ENCODE measurements at regions of chr19 and their contacts with region 1.

Region 1: DNA sequence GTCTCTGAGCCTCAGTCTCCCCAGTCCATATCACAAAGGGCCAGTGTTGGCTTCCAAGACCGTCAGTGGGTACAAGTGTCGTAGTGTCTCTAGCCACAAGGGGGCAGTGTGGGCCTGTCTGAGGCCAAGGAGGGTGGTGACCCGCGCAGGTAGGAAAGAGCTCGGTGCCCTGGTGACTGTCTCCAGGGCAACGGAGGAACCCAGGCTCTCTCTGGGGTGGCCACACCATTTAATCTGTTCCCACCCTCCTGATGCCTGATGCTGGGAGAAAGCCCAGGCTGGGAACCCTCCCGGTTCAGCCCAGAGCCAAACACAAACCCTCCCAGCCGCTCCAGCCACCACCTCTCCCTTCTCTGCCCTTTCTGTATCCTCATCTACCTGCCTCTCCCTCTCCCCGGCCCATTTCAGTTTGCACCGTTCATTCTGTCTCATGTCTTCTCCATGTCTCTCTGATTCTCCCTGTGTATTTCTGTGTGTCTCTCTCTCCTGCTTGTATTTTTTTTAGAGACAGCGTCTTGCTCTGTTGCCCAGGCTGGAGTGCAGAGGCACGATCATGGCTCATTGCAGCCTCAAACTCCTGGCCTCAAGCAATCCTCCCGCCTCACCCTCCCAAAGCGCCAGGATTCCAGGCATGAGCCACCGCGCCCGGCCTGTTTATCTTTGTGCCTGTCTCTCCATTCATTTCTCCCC is 17.5 kb upstream of the MEIS3 start:
- DNase-seq: peak; percentile 89
- H3K4me3 Mint-ChIP-seq: no peak overlapping the region
- H3K27ac Mint-ChIP-seq: peak overlapping the region; percentile 33
- H3K4me1 Mint-ChIP-seq: peaks cover 55% of the 10 kb centered on the region
- H3K27me3 Mint-ChIP-seq: peaks cover 60% of the 10 kb centered on the region

Region 2: DNA sequence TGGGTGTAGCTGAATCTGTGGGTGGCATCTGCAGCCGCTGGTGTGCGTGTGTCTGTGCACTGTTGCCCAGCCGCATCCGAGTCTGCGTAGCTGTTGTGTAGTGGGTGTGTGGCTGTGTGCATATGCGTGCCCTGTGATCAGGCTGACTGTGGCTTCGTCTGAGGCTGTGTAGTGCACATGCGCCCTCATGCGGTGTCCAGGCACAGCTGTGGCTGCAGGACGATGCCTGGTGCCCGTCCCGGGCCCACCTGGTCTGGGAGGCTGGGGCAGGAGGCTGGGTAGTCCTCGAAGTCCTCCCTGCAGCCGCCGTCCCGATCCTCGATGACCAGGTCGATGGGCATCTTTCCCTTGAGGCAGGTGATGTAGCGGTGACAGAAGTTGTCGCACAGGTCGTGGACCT is 22.4 kb before region 1 on chr19:
- CTCF ChIA-PET with region 1: no interaction called
- DNase-seq: no peak
- H3K4me3 Mint-ChIP-seq: no peak overlapping the region
- H3K27ac Mint-ChIP-seq: no peak overlapping the region
- H3K4me1 Mint-ChIP-seq: peaks cover 9% of the 10 kb centered on the region
- H3K27me3 Mint-ChIP-seq: peaks cover 61% of the 10 kb centered on the region

Region 3: GRCh38 chr19:47483800-47484690 is 47.2 kb after region 1 on chr19 and contains the start of gene KPTN:
- CTCF ChIA-PET with region 1: interaction called, 28 read pairs
- DNase-seq: peak; percentile 93
- H3K4me3 Mint-ChIP-seq: peak within 1 kb of the TSS; percentile 99
- H3K27ac Mint-ChIP-seq: peak within 1 kb of the TSS; percentile 94
- H3K4me1 Mint-ChIP-seq: peaks cover 46% of the 10 kb centered on the region
- H3K27me3 Mint-ChIP-seq: peaks cover 15% of the 10 kb centered on the region

Region 4: GRCh38 chr19:47514869-47515588 is 78.2 kb after region 1 on chr19 and contains the start of gene NAPA:
- CTCF ChIA-PET with region 1: interaction called, 14 read pairs
- DNase-seq: peak; percentile 100
- H3K4me3 Mint-ChIP-seq: peak within 1 kb of the TSS; percentile 98
- H3K27ac Mint-ChIP-seq: peak within 1 kb of the TSS; percentile 98
- H3K4me1 Mint-ChIP-seq: peaks cover 89% of the 10 kb centered on the region
- H3K27me3 Mint-ChIP-seq: peaks cover 8% of the 10 kb centered on the region

Region 5: DNA sequence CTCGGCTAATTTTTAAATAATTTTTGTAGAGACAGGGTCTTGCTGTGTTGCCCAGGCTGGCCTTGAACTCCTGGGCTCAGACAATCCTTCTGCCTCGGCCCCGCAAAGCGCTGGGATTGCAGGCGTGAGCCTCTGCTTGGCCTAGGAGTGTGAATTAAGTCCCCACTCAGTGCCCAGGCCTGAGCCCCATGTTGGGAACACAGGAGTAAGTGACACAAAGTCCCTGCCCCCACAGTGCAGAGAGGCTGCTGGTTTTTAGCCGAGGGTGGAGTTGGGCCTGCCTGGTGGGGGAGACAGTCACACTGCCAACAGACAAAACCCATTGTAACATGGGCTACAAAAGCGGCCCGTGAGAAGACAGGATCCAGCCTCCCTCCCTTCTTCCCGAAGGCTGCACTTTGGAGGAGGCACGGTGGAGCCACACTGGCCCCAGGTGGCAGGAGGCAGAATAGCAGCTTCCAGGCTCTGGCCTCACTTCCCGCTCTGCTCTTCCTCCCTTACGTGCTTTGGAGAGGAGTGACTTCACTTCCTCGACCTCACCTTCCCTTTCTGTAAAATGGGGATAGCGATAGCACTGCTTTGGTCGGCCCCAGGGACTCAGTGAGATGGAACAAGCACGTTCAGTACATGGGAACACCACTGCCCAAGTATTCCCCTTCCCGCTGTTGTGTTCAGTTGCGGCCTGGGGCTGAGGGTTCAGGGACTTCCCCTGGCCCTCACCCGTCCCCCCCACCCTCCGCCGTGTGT is 261.2 kb after region 1 on chr19:
- CTCF ChIA-PET with region 1: interaction called, 158 read pairs
- DNase-seq: peak; percentile 71
- H3K4me3 Mint-ChIP-seq: no peak overlapping the region
- H3K27ac Mint-ChIP-seq: no peak overlapping the region
- H3K4me1 Mint-ChIP-seq: peaks cover 4% of the 10 kb centered on the region
- H3K27me3 Mint-ChIP-seq: no peaks in the 10 kb centered on the region

Region 6: DNA sequence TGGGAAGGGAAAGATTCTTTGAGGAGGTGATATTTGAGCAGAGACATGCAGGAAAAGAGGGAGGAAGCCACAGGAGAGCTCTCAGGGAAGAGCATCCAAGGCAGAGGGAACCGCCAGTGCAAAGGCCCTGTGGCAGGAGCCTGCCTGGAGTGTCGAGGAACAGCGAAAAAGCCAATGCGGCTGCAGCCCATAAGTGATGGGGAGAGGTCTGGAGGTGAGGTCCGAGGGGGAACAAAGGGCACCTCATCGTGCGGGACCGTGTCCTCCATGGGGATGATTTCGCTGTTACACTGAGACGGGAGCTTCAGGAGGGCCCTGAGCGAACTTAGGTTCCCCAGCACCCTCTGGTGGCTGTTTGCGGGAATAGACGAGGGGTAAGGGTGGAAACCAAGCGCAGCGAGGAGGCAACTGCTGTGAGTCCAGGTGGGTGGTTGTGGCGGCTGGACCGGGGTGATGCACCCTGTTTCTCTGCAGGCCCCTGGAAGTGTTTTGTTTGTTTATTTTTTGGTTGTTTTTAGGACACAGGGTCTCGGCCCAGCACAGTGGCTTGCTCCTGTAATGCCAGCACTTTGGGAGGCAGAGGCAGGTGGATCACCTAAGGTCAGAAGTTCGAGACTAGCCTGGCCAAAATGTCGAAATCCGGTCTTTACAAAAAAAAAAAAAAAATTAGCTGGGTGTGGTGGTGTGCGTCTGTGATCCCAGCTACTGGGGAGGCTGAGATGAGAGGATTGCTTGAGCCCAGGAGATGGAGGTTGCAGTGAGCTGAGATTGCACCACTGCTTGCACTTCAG is 270.5 kb after region 1 on chr19:
- CTCF ChIA-PET with region 1: interaction called, 158 read pairs
- DNase-seq: peak; percentile 87
- H3K4me3 Mint-ChIP-seq: no peak overlapping the region
- H3K27ac Mint-ChIP-seq: no peak overlapping the region
- H3K4me1 Mint-ChIP-seq: peaks cover 3% of the 10 kb centered on the region
- H3K27me3 Mint-ChIP-seq: peaks cover 37% of the 10 kb centered on the region

Measured in activated naive CD4-positive, alpha-beta T cell treated with anti-CD3 and anti-CD28 coated beads, Interleukin-2, amount 10 ng/mL, durations not matched to agents 7 days and 5 days (primary cell).